BJ (cell line): ENCODE measurements at regions of chr12 and their contacts with region 1.

Region 1: GRCh38 chr12:91811481-91812287 is 334.0 kb downstream of the BTG1 start:
- DNase-seq: peak; percentile 1
- H3K4me3 ChIP-seq: no peak overlapping the region
- H3K27me3 ChIP-seq: no peaks in the 10 kb centered on the region
- CTCF ChIP-seq: peak; percentile 79

Region 2: GRCh38 chr12:91382081-91382543 is 429.6 kb before region 1 on chr12:
- CTCF ChIA-PET with region 1: interaction called, 10 read pairs
- POLR2A ChIA-PET with region 1: no interaction called
- DNase-seq: no peak
- H3K4me3 ChIP-seq: peak overlapping the region; percentile 30
- H3K27me3 ChIP-seq: peaks cover 1% of the 10 kb centered on the region; the same call in 1 of the 2 replicates
- CTCF ChIP-seq: peak; percentile 90

Region 3: GRCh38 chr12:91801048-91801447 is 10.6 kb before region 1 on chr12:
- CTCF ChIA-PET with region 1: interaction called, 13 read pairs
- POLR2A ChIA-PET with region 1: no interaction called
- DNase-seq: no peak
- H3K4me3 ChIP-seq: no peak overlapping the region
- H3K27me3 ChIP-seq: no peaks in the 10 kb centered on the region
- CTCF ChIP-seq: no peak

Region 4: DNA sequence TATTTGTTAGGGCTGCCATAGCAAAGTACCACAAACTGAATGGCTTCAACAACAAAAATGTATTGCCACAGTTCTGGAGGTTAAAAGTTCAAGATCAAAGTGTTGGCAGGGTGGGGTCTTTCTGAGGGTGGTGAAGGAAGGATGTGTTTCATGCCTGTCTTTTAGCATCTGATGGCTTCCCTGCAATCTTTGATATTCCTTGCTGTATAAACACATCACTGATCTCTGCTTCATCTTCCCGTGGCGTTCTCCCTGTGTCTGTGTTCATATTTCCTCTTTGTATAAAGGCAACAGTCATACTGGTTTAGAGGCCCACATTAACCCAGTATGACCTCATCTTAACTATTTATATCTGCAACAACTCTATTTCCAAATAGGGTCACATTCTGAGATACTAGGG is 166.5 kb after region 1 on chr12:
- CTCF ChIA-PET with region 1: no interaction called
- POLR2A ChIA-PET with region 1: no interaction called
- DNase-seq: no peak
- H3K4me3 ChIP-seq: no peak overlapping the region
- H3K27me3 ChIP-seq: no peaks in the 10 kb centered on the region
- CTCF ChIP-seq: no peak

Region 5: DNA sequence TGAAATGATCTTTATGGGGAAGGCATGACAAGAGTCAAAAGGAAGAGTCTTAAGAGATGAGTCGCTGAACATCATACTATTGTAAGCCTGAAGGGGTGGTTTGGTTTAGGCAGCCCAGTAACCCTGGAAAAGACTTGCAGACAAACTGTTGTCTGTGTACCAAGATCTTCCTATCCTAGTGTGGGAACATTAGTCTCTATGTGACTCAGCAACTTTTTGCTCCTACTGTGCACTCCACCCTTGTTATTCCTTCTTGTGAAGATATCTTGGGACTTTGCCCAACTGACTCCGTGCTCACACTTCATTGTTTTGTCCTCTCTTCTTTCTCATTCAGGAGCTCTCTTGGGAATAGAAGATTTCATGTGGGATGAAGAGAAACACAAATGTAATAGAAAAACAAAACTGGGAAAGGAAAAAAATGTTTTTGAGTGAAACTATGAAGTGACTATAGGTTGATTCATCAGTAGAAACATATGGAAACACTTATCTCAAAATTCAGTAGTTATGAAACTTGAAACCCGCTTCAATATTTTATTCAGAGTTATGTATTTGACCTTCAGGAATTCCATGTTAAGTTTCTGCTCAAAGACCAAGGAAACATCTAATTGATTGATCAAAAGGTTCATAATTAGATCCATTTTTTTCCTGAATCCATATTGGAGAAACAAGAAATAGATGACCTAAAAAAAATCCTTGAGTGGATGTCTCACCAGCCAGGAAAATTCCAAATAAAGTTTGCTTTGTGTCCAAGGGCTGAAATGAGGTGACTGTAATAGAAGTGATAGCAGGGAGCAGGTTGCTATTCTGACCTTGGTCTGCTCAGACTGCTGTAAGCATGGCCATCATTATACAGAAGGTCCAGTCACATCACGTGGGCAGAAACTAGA is 266.7 kb after region 1 on chr12:
- CTCF ChIA-PET with region 1: interaction called, 11 read pairs
- POLR2A ChIA-PET with region 1: no interaction called
- DNase-seq: peak; percentile 94
- H3K4me3 ChIP-seq: no peak overlapping the region
- H3K27me3 ChIP-seq: no peaks in the 10 kb centered on the region
- CTCF ChIP-seq: no peak

Region 6: GRCh38 chr12:92133795-92134637 is 322.3 kb after region 1 on chr12:
- CTCF ChIA-PET with region 1: interaction called, 10 read pairs
- POLR2A ChIA-PET with region 1: no interaction called
- DNase-seq: no peak
- H3K4me3 ChIP-seq: no peak overlapping the region
- H3K27me3 ChIP-seq: no peaks in the 10 kb centered on the region
- CTCF ChIP-seq: no peak

Region 7: GRCh38 chr12:92145731-92146496 is 334.2 kb after region 1 on chr12 and contains the start of gene BTG1:
- CTCF ChIA-PET with region 1: interaction called, 33 read pairs
- POLR2A ChIA-PET with region 1: interaction called, 5 read pairs
- DNase-seq: peak; percentile 99
- H3K4me3 ChIP-seq: peak within 1 kb of the TSS; percentile 98
- H3K27me3 ChIP-seq: no peaks in the 10 kb centered on the region
- CTCF ChIP-seq: no peak
- polyA plus RNA-seq, gene BTG1: 73.8 and 81.3 TPM in 2 replicates

Region 8: DNA sequence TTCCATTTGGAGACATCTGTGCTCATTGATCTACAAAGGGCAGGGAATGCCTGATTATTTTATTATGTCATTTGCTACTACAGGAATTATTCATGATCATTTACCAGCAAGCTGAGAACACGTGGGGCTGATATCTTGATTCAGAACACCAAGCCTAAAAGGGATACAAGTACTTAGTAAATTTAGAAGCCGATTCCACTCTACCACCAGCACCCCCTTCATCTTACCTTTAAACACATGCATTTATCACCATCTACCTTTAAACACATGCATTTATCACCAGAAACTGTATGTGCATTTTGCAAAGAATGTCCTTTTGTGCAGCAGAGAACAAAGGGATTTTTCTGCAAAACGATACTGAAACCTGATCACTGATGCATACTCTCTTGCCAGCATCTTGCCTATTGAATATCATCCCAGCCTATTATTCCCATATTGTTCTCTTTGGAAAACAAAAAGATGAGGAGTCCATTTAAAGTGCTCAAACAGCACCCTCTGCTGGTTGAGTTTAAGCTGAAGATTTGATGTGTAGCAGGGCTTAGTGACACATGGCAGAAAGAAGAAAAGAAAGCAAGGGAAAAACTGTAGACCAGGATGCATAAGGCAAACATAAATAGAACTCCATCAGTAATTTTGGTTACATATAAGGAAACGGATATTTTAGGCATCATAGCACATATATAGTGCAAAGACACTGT is 758.5 kb after region 1 on chr12:
- CTCF ChIA-PET with region 1: interaction called, 10 read pairs
- POLR2A ChIA-PET with region 1: no interaction called
- DNase-seq: peak; percentile 16
- H3K4me3 ChIP-seq: no peak overlapping the region
- H3K27me3 ChIP-seq: no peaks in the 10 kb centered on the region
- CTCF ChIP-seq: peak; percentile 63